ENCODE measurements at regions of chr1 and their contacts with region 1.

Region 1: DNA sequence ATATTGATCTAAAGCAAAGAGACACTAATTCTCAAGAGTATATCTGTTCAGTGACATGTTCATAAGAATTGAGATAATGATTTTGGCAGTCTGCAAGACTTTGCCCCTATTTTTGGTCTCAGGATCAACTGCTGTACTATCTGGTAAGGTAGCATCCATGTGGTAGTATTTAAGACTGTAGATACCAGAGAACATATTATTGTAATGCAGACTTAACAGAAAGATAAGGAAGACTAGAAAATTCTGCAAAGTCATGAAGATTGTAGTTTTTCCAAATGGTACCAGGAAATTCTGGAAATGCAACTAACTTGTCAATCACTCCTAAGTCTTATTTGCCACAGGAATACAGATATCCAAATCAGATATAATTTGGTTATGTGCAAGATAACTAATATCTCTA is 35.1 kb downstream of the RNF2 start:
- DNase-seq: no peak
- ATAC-seq: no peak
- H3K4me3 ChIP-seq: no peak overlapping the region
- H3K4me3 Mint-ChIP-seq: no peak overlapping the region
- H3K27ac ChIP-seq: no peak overlapping the region
- H3K27ac Mint-ChIP-seq: no peak overlapping the region
- H3K4me1 ChIP-seq: no peaks in the 10 kb centered on the region
- H3K4me1 Mint-ChIP-seq: peaks cover 42 to 53% (median 42%) of the 10 kb centered on the region in 3 donors
- H3K27me3 ChIP-seq: no peaks in the 10 kb centered on the region
- H3K27me3 Mint-ChIP-seq: no peaks in the 10 kb centered on the region

Region 2: DNA sequence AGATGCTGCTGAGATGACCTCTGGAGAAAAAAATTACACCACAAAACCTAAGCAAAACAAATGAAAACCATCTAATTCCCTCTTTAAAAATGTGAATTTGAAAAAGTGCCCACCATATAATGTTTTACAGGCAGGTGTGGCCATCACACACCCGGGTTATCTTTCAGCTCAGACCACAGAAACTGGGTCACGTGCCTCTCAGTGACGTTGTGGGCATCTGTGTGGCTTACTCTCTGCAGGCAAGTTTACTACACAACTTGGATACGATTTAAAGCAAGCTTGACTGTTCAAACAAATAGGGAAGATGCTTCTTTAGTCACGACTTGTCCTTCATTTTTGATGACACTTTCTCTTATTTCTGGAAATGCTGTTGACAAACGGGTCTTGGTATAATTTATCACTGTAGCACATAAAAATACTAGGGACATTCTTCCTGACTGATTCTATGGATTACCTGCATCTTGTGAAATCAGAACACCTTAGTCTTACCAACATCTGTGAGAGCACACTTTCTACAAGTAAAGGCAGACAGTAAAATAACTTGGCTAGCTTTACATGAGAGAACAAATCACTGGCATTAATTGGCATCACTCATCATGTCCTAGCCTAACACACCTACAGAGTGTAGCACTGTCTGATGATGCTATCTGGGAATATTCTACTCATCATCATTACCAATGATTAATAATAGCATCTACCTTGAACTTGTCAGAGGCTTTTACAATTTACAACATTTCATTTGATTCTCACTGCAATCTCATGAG is 236.5 kb before region 1 on chr1:
- CTCF ChIA-PET with region 1: no interaction called
- POLR2A ChIA-PET with region 1: interaction called in 1 of 2 experiments, 10 read pairs
- DNase-seq: peak; percentile 14 to 84 (median 61)
- ATAC-seq: peak; percentile 44 to 77 (median 68)
- H3K4me3 ChIP-seq: no peak overlapping the region
- H3K4me3 Mint-ChIP-seq: no peak overlapping the region
- H3K27ac ChIP-seq: peak overlapping the region; percentile 61
- H3K27ac Mint-ChIP-seq: peak overlapping the region; percentile 23 to 81
- H3K4me1 ChIP-seq: peaks cover 0 to 16% of the 10 kb centered on the region in 2 experiments
- H3K4me1 Mint-ChIP-seq: peaks cover 23 to 44% (median 43%) of the 10 kb centered on the region in 3 donors
- H3K27me3 ChIP-seq: no peaks in the 10 kb centered on the region
- H3K27me3 Mint-ChIP-seq: no peaks in the 10 kb centered on the region

Measured in T-cell (primary cell).